ENCODE measurements at regions of chr6 and their contacts with region 1.

Region 1: DNA sequence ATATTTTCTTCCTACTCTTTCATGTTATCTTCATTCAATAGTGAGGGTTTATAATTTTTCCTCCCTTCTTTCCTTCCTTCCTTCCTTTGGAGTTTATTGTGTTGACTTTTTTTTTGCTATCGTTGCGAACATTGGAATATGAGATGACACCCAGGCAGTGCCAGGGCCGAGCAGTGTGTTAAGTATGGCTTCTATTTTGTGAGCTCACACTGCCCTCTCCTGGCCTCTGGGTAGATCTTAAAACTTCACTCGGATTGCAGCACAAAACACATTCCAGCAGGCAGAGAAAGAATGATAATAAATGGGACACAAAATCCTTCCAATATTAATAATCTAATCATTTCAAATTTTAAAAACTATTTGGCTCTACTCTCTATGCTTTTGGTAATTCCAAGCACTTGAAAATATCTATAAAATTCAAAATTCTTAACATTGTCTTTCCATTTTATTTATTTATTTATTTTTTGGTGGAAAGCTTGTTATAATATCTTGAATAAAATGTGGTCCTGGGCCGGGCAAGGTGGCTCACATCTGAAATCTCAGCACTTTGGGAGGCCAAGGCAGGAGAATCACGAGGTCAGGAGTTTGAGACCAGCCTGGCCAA is 147.4 kb upstream of the OLIG3 start:
- DNase-seq: peak; percentile 60 to 87 (median 62)
- ATAC-seq: peak; percentile 86 to 89
- H3K4me3 ChIP-seq: no peak overlapping the region
- H3K27ac ChIP-seq: no peak overlapping the region
- H3K4me1 ChIP-seq: peaks cover 1% of the 10 kb centered on the region
- H3K27me3 ChIP-seq: no peaks in the 10 kb centered on the region

Region 2: GRCh38 chr6:137076277-137077068 is 565.1 kb before region 1 on chr6:
- intact Hi-C with region 1: loop called in 1 of 4 experiments (anchors 5 kb)
- DNase-seq: peak; percentile 62 to 86 (median 81)
- ATAC-seq: peak; percentile 95 to 98
- H3K4me3 ChIP-seq: no peak overlapping the region
- H3K27ac ChIP-seq: no peak overlapping the region
- H3K4me1 ChIP-seq: no peaks in the 10 kb centered on the region
- H3K27me3 ChIP-seq: no peaks in the 10 kb centered on the region

Region 3: GRCh38 chr6:137148306-137149034 is 493.1 kb before region 1 on chr6:
- intact Hi-C with region 1: no loop called
- DNase-seq: no peak
- ATAC-seq: no peak
- H3K4me3 ChIP-seq: no peak overlapping the region
- H3K27ac ChIP-seq: no peak overlapping the region
- H3K4me1 ChIP-seq: no peaks in the 10 kb centered on the region
- H3K27me3 ChIP-seq: no peaks in the 10 kb centered on the region

Region 4: DNA sequence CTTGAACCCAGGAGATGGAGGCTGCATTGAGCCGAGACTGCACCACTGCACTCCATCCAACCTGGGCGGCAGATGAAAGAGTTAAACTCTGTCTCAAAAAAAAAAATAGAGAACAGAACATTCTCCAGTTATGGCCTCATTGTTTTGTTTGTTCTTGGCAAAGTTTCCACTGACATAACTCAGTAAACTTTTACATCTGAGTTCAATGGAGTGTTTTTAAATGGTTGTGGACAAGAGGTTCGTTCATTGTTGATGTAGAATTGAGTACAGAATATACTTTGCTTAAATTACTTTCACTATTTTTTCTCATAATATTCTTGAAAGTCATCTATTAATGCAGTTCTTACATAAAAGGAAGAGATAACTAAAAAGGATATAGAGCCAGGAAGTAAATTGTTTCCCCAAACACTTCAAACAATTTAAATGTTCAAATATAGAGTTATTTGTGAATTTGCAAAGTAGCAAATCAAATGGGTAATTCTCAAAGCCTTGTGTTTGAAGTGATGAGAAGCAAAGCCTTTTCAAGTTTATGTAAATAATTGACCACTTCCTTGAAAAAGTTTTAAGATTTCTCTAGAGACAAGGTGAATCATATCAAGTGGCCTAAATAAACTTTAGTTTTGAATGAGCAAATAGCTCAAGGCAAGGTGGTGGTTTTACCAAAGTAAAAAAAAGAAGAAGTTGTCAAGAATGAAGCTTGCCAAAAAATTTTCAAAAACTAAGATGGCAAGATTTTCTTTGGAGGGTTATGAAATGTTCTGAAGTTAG is 380.0 kb before region 1 on chr6:
- intact Hi-C with region 1: loop called in 2 of 4 experiments (anchors 10 kb)
- DNase-seq: no peak
- ATAC-seq: peak; percentile 28 to 46
- H3K4me3 ChIP-seq: no peak overlapping the region
- H3K27ac ChIP-seq: no peak overlapping the region
- H3K4me1 ChIP-seq: peaks cover 7% of the 10 kb centered on the region
- H3K27me3 ChIP-seq: no peaks in the 10 kb centered on the region

Region 5: GRCh38 chr6:137271245-137272183 is 370.1 kb before region 1 on chr6:
- intact Hi-C with region 1: loop called (anchors 5 to 10 kb)
- DNase-seq: no peak
- ATAC-seq: peak; percentile 68 to 74
- H3K4me3 ChIP-seq: no peak overlapping the region
- H3K27ac ChIP-seq: no peak overlapping the region
- H3K4me1 ChIP-seq: no peaks in the 10 kb centered on the region
- H3K27me3 ChIP-seq: no peaks in the 10 kb centered on the region

Region 6: GRCh38 chr6:137313928-137314855 is 327.4 kb before region 1 on chr6:
- intact Hi-C with region 1: loop called in 1 of 4 experiments (anchors 10 kb)
- DNase-seq: peak; percentile 76 to 91 (median 82)
- ATAC-seq: peak; percentile 88 to 95
- H3K4me3 ChIP-seq: peak overlapping the region; percentile 52
- H3K27ac ChIP-seq: no peak overlapping the region
- H3K4me1 ChIP-seq: peaks cover 5% of the 10 kb centered on the region
- H3K27me3 ChIP-seq: no peaks in the 10 kb centered on the region

Measured in right cardiac atrium (tissue), 5 donors.